CD4-positive, alpha-beta memory T cell (primary cell): ENCODE measurements at regions of chr1 and their contacts with region 1.

Region 1: DNA sequence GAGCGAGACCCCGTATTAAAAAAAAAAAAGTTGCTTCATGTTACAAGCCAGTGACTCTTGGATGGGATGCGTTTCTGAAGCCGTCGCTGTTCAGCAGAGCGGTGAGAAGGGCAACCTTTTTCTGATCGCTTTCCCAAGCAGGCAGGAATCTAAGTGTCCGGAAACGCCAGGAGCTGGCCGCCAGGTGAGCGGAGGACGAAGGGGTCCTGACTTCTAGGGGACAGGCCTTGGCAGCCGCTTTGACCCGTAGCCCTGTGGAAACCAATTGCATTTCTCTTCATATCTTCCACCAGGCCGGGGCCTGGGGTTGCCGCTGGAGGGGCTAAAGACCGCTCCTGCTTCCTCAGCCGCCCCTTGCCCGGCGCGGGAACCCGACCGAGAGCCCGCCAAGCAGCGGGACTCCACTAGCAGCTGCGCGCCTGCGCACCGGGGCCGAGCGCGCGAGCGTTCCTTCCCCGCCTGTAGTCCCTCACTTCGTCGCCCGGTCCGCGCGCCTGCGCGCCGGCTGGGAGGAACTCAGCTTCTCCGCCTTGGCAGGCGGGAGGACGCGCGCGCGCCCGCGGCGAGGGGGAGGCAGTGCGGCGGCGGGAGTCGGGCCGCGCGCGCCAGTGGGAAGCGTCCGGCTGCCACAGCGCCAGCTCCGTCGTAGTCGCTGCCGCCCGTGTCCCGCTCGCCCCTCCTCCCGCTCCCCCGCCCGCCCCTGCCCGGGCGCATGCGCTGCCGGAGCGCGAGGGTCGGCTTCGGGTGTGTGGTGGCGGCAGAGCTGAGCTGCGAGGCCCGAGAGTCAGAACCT is at the start of gene SPEN:
- DNase-seq: peak; percentile 98 to 99 (median 99)
- H3K4me3 ChIP-seq: peak within 1 kb of the TSS; percentile 62 to 65
- H3K4me3 Mint-ChIP-seq: peak within 1 kb of the TSS; percentile 95 to 99 (median 98)
- H3K27ac ChIP-seq: peak within 1 kb of the TSS; percentile 86
- H3K27ac Mint-ChIP-seq: peak within 1 kb of the TSS; percentile 97 to 99 (median 98)
- H3K4me1 ChIP-seq: peaks cover 52% of the 10 kb centered on the region
- H3K4me1 Mint-ChIP-seq: peaks cover 23 to 60% (median 35%) of the 10 kb centered on the region in 4 donors
- H3K27me3 ChIP-seq: no peaks in the 10 kb centered on the region
- H3K27me3 Mint-ChIP-seq: no peaks in the 10 kb centered on the region
- total RNA-seq, gene SPEN: 80.8 to 87.8 TPM

Region 2: GRCh38 chr1:15825800-15826199 is 21.5 kb before region 1 on chr1:
- CTCF ChIA-PET with region 1: no interaction called
- POLR2A ChIA-PET with region 1: interaction called, 12 read pairs
- intact Hi-C with region 1: no loop called
- DNase-seq: no peak
- H3K4me3 ChIP-seq: no peak overlapping the region
- H3K4me3 Mint-ChIP-seq: no peak overlapping the region
- H3K27ac ChIP-seq: no peak overlapping the region
- H3K27ac Mint-ChIP-seq: peak overlapping the region in 1 of 7 donors; percentile 75
- H3K4me1 ChIP-seq: peaks cover 11% of the 10 kb centered on the region
- H3K4me1 Mint-ChIP-seq: peaks cover 6 to 20% (median 11%) of the 10 kb centered on the region in 4 donors
- H3K27me3 ChIP-seq: no peaks in the 10 kb centered on the region
- H3K27me3 Mint-ChIP-seq: no peaks in the 10 kb centered on the region

Region 3: DNA sequence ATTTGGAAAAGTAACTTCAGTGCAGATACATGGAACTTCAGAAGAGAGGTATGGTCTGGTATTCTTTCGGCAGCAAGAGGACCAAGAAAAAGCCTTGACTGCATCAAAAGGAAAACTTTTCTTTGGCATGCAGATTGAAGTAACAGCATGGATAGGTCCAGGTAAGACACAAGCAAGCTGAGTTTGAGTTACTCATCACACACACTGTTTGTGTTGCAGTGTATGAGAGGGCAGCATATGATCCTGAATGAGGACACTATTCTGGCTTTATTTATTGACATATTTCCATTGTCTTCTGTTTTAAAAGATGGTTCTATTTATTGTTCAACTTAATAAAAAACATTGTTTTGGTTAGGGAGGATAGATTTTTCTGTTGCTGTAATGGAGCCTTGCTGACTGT is 63.8 kb after region 1 on chr1:
- CTCF ChIA-PET with region 1: no interaction called
- POLR2A ChIA-PET with region 1: interaction called, 10 read pairs
- intact Hi-C with region 1: no loop called
- DNase-seq: no peak
- H3K4me3 ChIP-seq: no peak overlapping the region
- H3K4me3 Mint-ChIP-seq: no peak overlapping the region
- H3K27ac ChIP-seq: no peak overlapping the region
- H3K27ac Mint-ChIP-seq: peak overlapping the region in 2 of 7 donors; percentile 45 to 60
- H3K4me1 ChIP-seq: peaks cover 9% of the 10 kb centered on the region
- H3K4me1 Mint-ChIP-seq: peaks cover 4 to 23% (median 8%) of the 10 kb centered on the region in 4 donors
- H3K27me3 ChIP-seq: no peaks in the 10 kb centered on the region
- H3K27me3 Mint-ChIP-seq: no peaks in the 10 kb centered on the region

Region 4: GRCh38 chr1:15975805-15976680 is 128.7 kb after region 1 on chr1 and contains the start of gene ZBTB17:
- CTCF ChIA-PET with region 1: no interaction called
- POLR2A ChIA-PET with region 1: interaction called, 26 read pairs
- intact Hi-C with region 1: no loop called
- DNase-seq: peak; percentile 94 to 96 (median 95)
- H3K4me3 ChIP-seq: peak within 1 kb of the TSS; percentile 43 to 83
- H3K4me3 Mint-ChIP-seq: peak within 1 kb of the TSS; percentile 87 to 97 (median 89)
- H3K27ac ChIP-seq: peak within 1 kb of the TSS; percentile 70
- H3K27ac Mint-ChIP-seq: peak within 1 kb of the TSS; percentile 88 to 96 (median 94)
- H3K4me1 ChIP-seq: peaks cover 25% of the 10 kb centered on the region
- H3K4me1 Mint-ChIP-seq: peaks cover 22 to 43% (median 32%) of the 10 kb centered on the region in 4 donors
- H3K27me3 ChIP-seq: no peaks in the 10 kb centered on the region
- H3K27me3 Mint-ChIP-seq: no peaks in the 10 kb centered on the region
- total RNA-seq, gene ZBTB17: 52.6 to 61.0 TPM

Region 5: DNA sequence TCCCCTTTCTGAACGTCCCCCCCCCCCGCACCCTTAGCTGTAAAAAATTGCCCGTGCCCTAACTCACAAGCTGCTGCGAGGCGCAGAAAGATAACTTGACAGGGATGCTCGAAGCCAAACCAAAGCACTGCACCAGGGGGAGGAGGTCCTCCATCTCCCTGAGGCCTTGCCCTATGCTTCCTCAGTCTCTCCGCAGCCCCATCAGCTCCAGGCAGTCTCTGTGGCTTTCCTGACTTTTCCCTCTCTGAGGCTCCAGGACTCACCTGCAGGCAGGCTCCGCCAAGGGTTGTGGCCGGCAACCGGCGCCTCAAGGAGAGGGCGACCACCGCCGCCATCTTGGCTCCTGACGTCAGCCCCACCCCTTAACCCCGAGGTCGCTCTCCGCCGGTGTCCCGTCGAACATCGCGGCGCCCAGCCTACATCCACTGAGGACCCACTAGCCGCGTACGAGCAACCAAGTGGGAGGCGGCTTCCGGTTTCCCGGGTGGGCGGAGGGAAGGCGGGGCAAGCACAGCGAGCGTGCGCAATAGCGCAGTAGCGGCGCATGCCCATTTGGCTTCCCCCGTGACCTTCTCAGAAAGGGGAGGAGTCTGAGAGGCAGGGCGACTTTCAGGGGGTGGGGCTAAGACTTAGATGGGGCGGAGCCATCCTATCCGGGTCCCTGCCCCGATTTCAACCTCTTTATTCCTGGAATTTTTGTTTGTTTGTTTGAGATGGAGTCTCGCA is 1206.6 kb after region 1 on chr1 and contains the start of gene SDHB:
- CTCF ChIA-PET with region 1: no interaction called
- POLR2A ChIA-PET with region 1: no interaction called
- intact Hi-C with region 1: loop called (anchors 5 kb)
- DNase-seq: peak; percentile 98 to 100 (median 99)
- H3K4me3 ChIP-seq: peak within 1 kb of the TSS; percentile 72 to 89
- H3K4me3 Mint-ChIP-seq: peak within 1 kb of the TSS; percentile 97 to 100 (median 99)
- H3K27ac ChIP-seq: peak within 1 kb of the TSS; percentile 83
- H3K27ac Mint-ChIP-seq: peak within 1 kb of the TSS; percentile 95 to 99 (median 99)
- H3K4me1 ChIP-seq: peaks cover 18% of the 10 kb centered on the region
- H3K4me1 Mint-ChIP-seq: peaks cover 17 to 38% (median 27%) of the 10 kb centered on the region in 4 donors
- H3K27me3 ChIP-seq: no peaks in the 10 kb centered on the region
- H3K27me3 Mint-ChIP-seq: peaks cover 0 to 2% of the 10 kb centered on the region in 2 donors
- total RNA-seq, gene SDHB: 57.0 to 66.4 TPM